Left cardiac atrium (tissue), 4 donors: ENCODE measurements at regions of chr19 and their contacts with region 1.

Region 1: GRCh38 chr19:3403489-3404323 is 37.3 kb downstream of the NFIC start:
- DNase-seq: peak; percentile 94
- ATAC-seq: peak; percentile 76 to 77

Region 2: GRCh38 chr19:3336680-3337523 is 66.8 kb before region 1 on chr19:
- intact Hi-C with region 1: loop called in 1 of 2 experiments (anchors 10 kb)
- DNase-seq: peak; percentile 92
- ATAC-seq: peak; percentile 94

Region 3: DNA sequence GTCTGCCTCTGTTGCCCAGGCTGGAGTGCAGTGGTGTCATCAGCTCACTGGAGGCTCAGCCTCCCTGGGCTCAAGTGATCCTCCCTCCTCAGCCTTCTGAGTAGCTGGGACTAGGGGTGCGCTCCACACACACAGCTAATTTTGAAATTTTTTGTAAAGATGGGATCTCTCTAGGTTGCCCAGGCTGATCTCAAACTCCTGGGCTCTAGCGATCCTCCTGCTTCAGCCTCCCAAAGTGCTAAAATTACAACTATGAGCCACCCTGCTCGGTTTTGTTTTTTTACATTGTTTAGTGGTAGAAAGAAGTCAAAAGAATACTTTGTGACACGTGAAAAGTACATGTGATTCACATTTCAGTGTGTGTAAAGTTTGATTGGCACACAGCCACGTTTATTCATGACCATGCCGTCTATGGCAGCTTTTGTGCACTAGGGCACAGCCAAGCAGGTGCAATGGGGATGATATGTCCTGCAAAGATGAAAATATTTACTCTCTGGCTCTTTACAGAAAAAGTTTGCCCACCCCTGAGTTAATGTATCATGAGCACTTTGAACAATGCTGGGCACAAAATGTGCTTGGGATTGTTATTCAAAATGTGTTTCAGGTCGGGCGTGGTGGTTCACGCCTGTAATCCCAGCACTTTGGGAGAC is 53.6 kb before region 1 on chr19:
- intact Hi-C with region 1: no loop called
- DNase-seq: no peak
- ATAC-seq: no peak

Region 4: GRCh38 chr19:3365836-3366752 is 37.6 kb before region 1 on chr19 and contains the start of gene NFIC:
- intact Hi-C with region 1: loop called (anchors 5 kb)
- DNase-seq: peak; percentile 83
- ATAC-seq: peak; percentile 68 to 69
- total RNA-seq, gene NFIC: 144 to 173 TPM

Region 5: DNA sequence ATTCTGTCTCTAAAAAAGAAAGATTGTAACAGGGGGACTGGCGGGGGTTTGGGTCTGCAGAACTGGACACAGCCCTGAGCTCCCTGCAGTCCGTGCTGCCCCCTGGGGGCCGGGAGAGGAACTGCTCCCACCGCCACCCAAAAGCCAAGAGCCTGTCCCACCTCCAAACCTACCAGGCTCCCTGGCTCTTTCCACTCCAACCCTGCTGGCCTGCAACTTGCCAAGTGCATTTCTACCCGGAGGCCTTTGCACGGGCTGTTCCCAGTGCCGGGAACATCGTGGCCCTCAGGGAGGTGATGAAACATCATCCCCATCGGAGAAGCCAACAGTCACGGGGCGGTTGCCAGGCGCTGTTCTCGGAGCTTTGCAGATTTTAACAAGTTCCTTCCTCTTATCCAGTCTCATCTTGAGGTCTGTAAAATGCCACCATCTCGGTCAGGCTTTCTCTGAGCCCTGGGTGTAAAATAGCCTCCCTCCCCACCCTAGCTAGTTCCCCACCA is 25.9 kb after region 1 on chr19:
- intact Hi-C with region 1: loop called in 1 of 2 experiments (anchors 2 kb)
- DNase-seq: peak; percentile 92
- ATAC-seq: peak; percentile 82 to 85

Region 6: GRCh38 chr19:3642987-3643673 is 239.4 kb after region 1 on chr19:
- intact Hi-C with region 1: no loop called
- DNase-seq: no peak
- ATAC-seq: no peak